ENCODE measurements at regions of chr2 and their contacts with region 1.

Region 1: GRCh38 chr2:74529357-74530238 is at the starts of genes AUP1 and HTRA2:
- DNase-seq: peak; percentile 98
- ATAC-seq: peak; percentile 94 to 98 (median 96)
- H3K4me3 ChIP-seq: peak within 1 kb of the TSS; percentile 63 to 97 (median 88)
- H3K27ac ChIP-seq: peak within 1 kb of the TSS; percentile 72 to 95 (median 91)
- H3K4me1 ChIP-seq: peaks cover 12 to 35% (median 31%) of the 10 kb centered on the region in 9 donors
- H3K27me3 ChIP-seq: no peaks in the 10 kb centered on the region
- CTCF ChIP-seq: no peak
- total RNA-seq, gene AUP1: 31.4 to 74.2 (median 38.2) TPM
- total RNA-seq, gene HTRA2: 21.2 to 29.6 (median 24.9) TPM

Region 2: GRCh38 chr2:74491648-74492544 is 37.7 kb before region 1 on chr2:
- intact Hi-C with region 1: no loop called
- DNase-seq: no peak
- ATAC-seq: peak in 2 of 8 donors; percentile 12 to 22
- H3K4me3 ChIP-seq: no peak overlapping the region
- H3K27ac ChIP-seq: no peak overlapping the region
- H3K4me1 ChIP-seq: no peaks in the 10 kb centered on the region
- H3K27me3 ChIP-seq: peaks cover 0 to 6% (median 3%) of the 10 kb centered on the region in 7 donors
- CTCF ChIP-seq: no peak

Region 3: DNA sequence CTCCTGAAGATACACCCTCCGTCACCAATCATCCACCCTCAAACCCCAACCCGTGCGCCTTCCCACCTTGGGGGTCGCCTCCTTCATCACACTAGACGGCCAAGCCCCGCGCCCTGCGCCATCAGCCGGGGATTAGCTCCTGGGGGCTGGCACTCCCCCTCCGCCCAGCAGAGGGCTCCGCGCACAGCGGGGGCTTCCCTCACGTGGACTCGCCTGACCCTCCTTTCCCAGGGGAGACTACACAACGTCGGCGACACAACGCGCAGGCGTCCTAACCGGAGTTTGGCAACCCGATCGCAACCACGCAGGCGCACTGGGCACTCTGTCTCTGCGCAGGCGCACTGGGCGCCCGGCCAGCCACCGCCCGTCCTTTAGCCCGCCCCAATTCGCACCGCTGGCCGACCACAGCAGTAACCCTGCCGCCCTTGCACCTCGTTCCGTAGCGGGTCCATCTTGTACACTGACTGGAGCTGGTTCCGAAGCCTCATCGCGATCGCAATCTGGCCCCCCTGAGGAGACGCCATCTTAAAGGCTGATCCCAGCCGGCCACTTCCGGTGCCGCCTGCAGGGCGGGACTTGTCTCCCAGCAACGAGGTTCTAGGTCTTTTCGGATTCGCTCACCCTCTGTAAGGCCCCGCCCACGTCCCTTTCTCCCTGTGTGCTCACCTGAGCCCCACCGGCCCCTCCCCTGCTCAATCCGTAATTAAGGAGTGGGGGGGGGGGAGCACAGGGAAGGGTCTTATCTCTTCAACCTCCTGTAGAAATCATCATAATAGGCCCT is 22.3 kb before region 1 on chr2 and contains the start of gene PCGF1:
- intact Hi-C with region 1: loop called in 3 of 10 experiments (anchors 1 to 2 kb)
- DNase-seq: peak; percentile 99
- ATAC-seq: peak; percentile 95 to 97 (median 96)
- H3K4me3 ChIP-seq: peak within 1 kb of the TSS; percentile 64 to 83 (median 70)
- H3K27ac ChIP-seq: peak within 1 kb of the TSS; percentile 95 to 99 (median 96)
- H3K4me1 ChIP-seq: peaks cover 8 to 55% (median 43%) of the 10 kb centered on the region in 9 donors
- H3K27me3 ChIP-seq: peaks cover 0 to 56% (median 43%) of the 10 kb centered on the region in 7 donors
- CTCF ChIP-seq: peak in 8 of 9 donors; percentile 40 to 67 (median 49)
- total RNA-seq, gene PCGF1: 10.7 to 27.4 (median 14.9) TPM

Region 4: DNA sequence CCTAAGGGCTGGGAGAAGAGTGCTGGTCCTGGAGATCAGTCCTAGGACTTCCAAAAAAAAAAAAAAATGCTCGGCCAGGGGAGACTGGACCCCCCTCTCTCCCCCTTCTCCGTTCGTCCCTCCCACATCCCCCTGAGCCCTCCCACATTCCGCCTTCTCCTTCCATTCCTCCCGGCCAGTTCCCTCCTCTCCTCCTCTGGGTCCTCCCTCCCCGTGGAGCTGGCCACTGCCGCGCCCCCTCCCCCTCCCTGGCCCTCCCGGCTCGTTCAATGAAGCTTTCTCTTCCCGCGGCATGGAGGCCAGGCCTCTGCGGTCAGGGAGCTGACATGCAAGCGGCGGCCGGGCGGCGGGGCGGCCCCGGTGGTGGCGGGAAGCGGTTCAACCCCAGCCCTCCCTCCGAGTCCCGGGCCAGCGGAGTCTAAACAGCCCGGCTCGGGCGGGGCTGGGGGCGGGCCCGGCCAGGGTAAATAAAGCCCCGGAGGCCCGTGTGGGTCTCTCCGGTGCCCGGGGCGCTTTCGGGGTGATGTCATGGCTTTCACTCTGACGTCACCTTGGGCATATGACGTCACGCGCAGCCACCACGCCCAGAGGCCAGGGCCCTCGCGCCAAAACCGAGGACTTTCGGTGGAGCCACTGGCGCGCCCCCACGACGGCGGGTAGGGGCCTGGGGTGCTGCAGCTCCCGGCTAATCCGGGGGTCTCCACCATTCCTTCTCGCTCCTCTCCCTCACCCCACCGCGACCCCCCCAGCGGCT is 24.5 kb after region 1 on chr2 and contains the start of gene LOXL3:
- intact Hi-C with region 1: loop called in 2 of 10 experiments (anchors 2 kb)
- DNase-seq: peak; percentile 81 to 87
- ATAC-seq: peak; percentile 74 to 83 (median 80)
- H3K4me3 ChIP-seq: peak within 1 kb of the TSS; percentile 40 to 83 (median 76)
- H3K27ac ChIP-seq: peak within 1 kb of the TSS; percentile 80 to 93 (median 90)
- H3K4me1 ChIP-seq: peaks cover 12 to 45% (median 22%) of the 10 kb centered on the region in 9 donors
- H3K27me3 ChIP-seq: peaks cover 0 to 10% (median 0%) of the 10 kb centered on the region in 7 donors
- CTCF ChIP-seq: no peak
- total RNA-seq, gene LOXL3: 1.2 to 9.2 (median 2.4) TPM

Measured in heart right ventricle (tissue), 16 donors.